ENCODE measurements at regions of chr1 and their contacts with region 1.

Region 1: GRCh38 chr1:150168960-150169601 is 19.4 kb downstream of the PLEKHO1 start:
- DNase-seq: peak in 1 of 2 experiments; percentile 86
- H3K4me3 ChIP-seq: no peak overlapping the region
- H3K27ac ChIP-seq: no peak overlapping the region
- H3K4me1 ChIP-seq: peaks cover 0 to 3% (median 2%) of the 10 kb centered on the region in 4 experiments; a peak in 4 of 7 replicates
- H3K27me3 ChIP-seq: no peaks in the 10 kb centered on the region
- CTCF ChIP-seq: peak; percentile 74 to 78 (median 78)
- EP300 ChIP-seq: no peak
- POLR2A ChIP-seq: no peak
- RAD21 ChIP-seq: peak; percentile 83 to 89

Region 2: DNA sequence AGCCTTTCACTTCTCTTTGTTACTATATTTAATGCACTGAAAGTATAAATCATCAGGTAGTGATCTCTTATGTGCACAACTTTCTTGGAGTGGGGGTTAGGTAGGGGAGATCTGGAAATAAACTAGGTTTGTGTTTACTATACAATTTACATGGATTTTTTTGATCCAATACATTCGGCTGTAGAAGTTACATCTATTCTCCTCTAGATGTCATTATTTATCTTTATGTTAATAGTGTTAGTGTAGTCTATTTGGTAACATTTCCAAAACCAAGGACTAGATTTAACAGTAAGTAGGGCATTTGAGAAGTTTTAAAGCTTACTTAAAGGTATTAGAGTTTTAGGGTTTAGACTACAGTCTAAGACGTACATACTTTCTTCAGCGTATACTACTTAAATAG is 96.1 kb before region 1 on chr1:
- CTCF ChIA-PET with region 1: interaction called, 34 read pairs
- POLR2A ChIA-PET with region 1: no interaction called
- DNase-seq: no peak
- H3K4me3 ChIP-seq: no peak overlapping the region
- H3K27ac ChIP-seq: no peak overlapping the region
- H3K4me1 ChIP-seq: no peaks in the 10 kb centered on the region
- H3K27me3 ChIP-seq: no peaks in the 10 kb centered on the region
- CTCF ChIP-seq: no peak
- EP300 ChIP-seq: no peak
- POLR2A ChIP-seq: no peak
- RAD21 ChIP-seq: no peak

Region 3: DNA sequence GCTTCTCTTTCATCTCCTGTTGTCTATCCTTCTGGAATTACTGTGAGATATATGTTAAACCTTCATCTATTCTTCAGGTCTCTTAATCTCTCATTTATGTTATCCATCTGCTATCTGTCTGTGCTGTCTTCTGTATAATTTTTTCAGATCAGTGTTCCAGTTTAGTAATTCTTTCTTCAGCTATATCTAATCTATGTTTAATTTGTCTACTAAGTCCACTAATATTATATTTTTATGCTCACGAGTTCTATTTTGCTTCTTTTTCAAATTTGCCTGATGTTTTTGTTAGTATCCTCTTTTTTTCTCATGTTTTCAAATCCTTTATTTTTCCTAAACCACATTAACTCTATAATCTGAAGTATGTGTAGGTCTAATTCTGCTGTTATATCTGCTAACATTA is 54.0 kb before region 1 on chr1:
- CTCF ChIA-PET with region 1: interaction called, 12 read pairs
- POLR2A ChIA-PET with region 1: interaction called, 4 read pairs
- DNase-seq: no peak
- H3K4me3 ChIP-seq: no peak overlapping the region
- H3K27ac ChIP-seq: no peak overlapping the region
- H3K4me1 ChIP-seq: no peaks in the 10 kb centered on the region
- H3K27me3 ChIP-seq: no peaks in the 10 kb centered on the region
- CTCF ChIP-seq: no peak
- EP300 ChIP-seq: no peak
- POLR2A ChIP-seq: no peak
- RAD21 ChIP-seq: no peak